Activated CD4-positive, alpha-beta T cell treated with anti-CD3 and anti-CD28 coated beads, Interleukin-2, amount 10 ng/mL, durations not matched to agents 24 days and 14 days (primary cell): ENCODE measurements at regions of chr19 and their contacts with region 1.

Region 1: GRCh38 chr19:43575156-43575950 is at the starts of genes PINLYP and XRCC1:
- DNase-seq: peak; percentile 99
- H3K4me3 Mint-ChIP-seq: peak within 1 kb of the TSS; percentile 96
- H3K27ac Mint-ChIP-seq: peak within 1 kb of the TSS; percentile 94
- H3K4me1 Mint-ChIP-seq: peaks cover 28% of the 10 kb centered on the region
- H3K27me3 Mint-ChIP-seq: no peaks in the 10 kb centered on the region
- total RNA-seq, gene PINLYP: 7.9 and 9.9 TPM in 2 replicates
- total RNA-seq, gene XRCC1: 27.5 and 29.6 TPM in 2 replicates

Region 2: DNA sequence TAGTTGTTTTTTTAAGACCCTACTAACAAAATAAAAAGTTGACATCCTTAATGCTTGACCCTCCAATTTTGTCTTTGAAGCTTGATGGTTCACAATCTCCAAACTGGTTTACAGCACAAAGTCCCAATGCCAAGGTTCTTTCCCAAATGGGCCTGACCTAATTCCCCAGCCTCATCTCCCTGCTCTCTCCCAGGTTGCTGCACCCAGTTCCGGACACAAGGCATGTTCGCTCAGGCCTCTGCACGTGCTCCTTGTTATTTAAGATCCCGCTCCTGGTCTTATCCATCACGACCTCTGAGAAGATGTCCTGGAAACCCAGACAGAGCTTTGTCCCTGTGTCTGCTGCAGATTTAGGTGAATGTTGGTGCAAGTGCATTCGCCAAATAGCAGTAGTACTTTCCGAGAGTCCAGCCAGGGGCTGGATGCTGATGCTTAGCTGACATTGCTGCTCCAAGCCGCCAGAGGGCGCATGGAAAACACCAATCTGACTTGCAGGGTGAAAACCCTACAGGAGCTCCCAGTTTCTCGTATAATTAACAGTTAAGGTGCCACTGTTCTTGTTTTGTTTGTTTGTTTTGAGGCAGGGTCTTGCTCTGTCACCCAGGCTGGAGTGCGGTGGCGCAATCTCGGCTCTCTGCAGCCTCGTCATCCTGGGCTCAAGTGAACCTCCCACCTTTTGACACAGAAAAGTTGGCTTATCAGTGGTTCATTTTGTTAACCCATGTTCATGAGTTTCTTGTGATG is 128.4 kb before region 1 on chr19:
- intact Hi-C with region 1: loop called (anchors 5 kb)
- DNase-seq: peak; percentile 93
- H3K4me3 Mint-ChIP-seq: no peak overlapping the region
- H3K27ac Mint-ChIP-seq: peak overlapping the region; percentile 44
- H3K4me1 Mint-ChIP-seq: peaks cover 25% of the 10 kb centered on the region
- H3K27me3 Mint-ChIP-seq: no peaks in the 10 kb centered on the region

Region 3: GRCh38 chr19:43532962-43533545 is 42.3 kb before region 1 on chr19 and contains the start of gene ZNF575:
- intact Hi-C with region 1: loop called (anchors 2 kb)
- DNase-seq: peak; percentile 95
- H3K4me3 Mint-ChIP-seq: peak within 1 kb of the TSS; percentile 83
- H3K27ac Mint-ChIP-seq: peak within 1 kb of the TSS; percentile 95
- H3K4me1 Mint-ChIP-seq: peaks cover 20% of the 10 kb centered on the region
- H3K27me3 Mint-ChIP-seq: no peaks in the 10 kb centered on the region
- total RNA-seq, gene ZNF575: 1.8 and 2.4 TPM in 2 replicates

Region 4: GRCh38 chr19:43619262-43620060 is 44.1 kb after region 1 on chr19 and contains the start of gene ZNF428:
- intact Hi-C with region 1: loop called (anchors 1 kb)
- DNase-seq: peak; percentile 96
- H3K4me3 Mint-ChIP-seq: peak within 1 kb of the TSS; percentile 98
- H3K27ac Mint-ChIP-seq: peak within 1 kb of the TSS; percentile 99
- H3K4me1 Mint-ChIP-seq: peaks cover 23% of the 10 kb centered on the region
- H3K27me3 Mint-ChIP-seq: no peaks in the 10 kb centered on the region
- total RNA-seq, gene ZNF428: 18.1 and 19.4 TPM in 2 replicates

Region 5: DNA sequence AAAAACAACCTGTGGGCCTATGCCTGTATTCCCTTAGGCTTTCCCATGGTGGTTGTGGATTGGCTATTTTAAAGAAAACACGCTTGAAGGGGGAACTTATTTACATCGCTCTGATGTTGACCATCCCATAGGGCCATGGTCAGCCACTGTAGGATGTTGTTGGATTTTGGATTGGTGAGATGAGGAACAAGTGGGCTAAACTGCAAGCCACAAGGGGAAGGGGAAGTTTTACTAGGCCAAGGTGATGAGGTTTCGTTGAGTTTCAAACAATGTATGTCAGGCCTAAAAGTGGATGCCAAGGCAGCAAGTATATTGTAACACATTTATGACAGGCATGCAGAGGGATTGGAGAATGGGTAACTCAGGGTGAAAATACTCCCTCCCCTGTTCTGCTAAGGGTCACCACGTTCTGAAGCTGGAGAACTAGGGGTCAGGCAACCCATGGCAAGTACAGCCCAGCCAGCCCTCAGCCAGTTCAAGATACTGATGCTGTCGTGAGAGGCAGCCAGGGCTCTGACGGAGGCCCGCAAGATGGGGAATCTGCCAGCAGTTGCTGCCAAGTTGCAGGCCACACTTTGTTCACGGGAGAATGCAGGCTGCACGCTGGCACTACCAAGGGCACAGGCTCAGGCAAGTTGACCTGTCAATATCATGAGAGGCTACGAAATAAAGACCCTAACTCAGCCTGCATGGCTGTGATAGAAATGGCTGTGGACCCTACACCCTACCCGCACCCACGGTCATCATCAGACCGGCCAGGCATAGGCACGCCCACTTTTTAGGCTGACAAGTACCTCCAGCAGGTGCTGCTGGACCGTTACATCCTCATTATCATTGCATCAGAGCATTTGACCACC is 151.6 kb after region 1 on chr19:
- intact Hi-C with region 1: no loop called
- DNase-seq: no peak
- H3K4me3 Mint-ChIP-seq: no peak overlapping the region
- H3K27ac Mint-ChIP-seq: no peak overlapping the region
- H3K4me1 Mint-ChIP-seq: peaks cover 4% of the 10 kb centered on the region
- H3K27me3 Mint-ChIP-seq: no peaks in the 10 kb centered on the region